ENCODE measurements at regions of chr10 and their contacts with region 1.

Region 1: GRCh38 chr10:78302989-78303854 is 269.6 kb downstream of the RPS24 start:
- DNase-seq: peak; percentile 98

Region 2: DNA sequence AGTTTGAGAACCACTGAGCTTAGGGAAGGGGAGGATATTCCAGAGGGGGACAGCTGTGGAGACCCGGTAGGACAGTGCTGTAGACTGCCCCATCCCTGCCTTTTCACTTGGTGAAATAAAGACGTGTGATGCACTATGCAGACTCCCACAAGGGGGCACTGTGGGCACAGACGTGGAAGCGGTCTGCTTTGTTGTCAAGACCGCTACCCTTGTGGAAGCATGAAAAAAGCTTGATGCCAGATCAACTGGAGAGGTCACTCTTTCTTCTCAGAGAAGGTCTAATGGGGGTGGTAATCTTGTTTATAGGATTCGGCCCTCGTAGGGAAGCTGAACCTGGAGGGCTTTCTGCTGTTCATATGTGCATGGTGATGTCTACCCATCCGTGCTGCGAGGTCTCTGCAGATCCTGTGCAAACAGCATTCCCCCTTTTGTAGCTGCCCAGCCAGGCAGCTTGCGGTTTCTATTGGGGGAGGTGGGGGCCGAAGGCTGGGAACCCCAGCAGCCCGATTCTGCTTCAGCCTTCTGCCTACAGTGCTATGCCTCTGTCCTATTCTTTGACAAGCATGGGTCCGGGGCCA is 255.8 kb before region 1 on chr10:
- intact Hi-C with region 1: loop called in 1 of 2 experiments (anchors 10 kb)
- DNase-seq: peak; percentile 96

Region 3: GRCh38 chr10:78211561-78212051 is 91.6 kb before region 1 on chr10:
- intact Hi-C with region 1: loop called in 1 of 2 experiments (anchors 5 kb)
- DNase-seq: peak; percentile 67

Region 4: DNA sequence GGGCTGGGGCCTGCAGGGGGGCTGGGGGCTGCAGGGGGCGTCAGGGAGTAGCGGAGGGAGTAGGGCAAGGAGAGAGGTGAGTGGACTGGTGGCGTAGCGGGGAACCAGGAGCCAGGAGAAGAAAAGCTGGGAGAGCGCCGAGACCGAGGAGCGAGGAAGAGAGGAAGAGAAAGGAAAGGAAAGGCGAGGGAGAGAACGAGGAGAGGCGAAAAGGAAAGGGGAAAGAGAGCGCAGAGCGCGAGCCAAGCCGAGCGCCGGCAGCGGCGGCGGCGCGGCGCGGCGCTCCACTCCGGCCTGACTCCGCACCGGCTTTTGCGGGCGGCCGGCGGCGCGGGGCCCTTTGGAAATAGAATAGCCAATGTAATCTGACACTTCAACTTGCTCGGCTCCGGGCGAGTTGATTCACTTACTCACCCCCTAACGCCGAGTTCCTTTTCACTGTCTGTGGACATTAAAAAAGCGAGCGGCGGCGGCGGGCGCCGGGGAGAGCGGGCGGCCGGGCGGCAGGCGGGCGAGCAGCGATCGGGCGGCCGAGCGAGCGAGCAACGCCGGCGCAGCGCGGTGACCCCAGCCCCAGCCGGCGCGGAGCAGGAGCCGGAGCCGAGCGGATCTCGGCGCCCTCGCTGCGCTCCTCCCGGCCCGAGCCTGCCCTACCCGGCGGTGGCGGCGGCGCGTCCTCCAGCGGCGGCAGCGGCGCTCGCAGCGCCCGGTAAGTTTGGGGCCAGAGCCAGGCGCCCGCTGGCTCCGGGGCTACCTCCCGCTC is 765.5 kb after region 1 on chr10 and contains the start of gene ZMIZ1:
- intact Hi-C with region 1: loop called in 1 of 2 experiments (anchors 10 kb)
- DNase-seq: peak; percentile 97
- total RNA-seq, gene ZMIZ1: 61.5 to 62.6 TPM

Region 5: DNA sequence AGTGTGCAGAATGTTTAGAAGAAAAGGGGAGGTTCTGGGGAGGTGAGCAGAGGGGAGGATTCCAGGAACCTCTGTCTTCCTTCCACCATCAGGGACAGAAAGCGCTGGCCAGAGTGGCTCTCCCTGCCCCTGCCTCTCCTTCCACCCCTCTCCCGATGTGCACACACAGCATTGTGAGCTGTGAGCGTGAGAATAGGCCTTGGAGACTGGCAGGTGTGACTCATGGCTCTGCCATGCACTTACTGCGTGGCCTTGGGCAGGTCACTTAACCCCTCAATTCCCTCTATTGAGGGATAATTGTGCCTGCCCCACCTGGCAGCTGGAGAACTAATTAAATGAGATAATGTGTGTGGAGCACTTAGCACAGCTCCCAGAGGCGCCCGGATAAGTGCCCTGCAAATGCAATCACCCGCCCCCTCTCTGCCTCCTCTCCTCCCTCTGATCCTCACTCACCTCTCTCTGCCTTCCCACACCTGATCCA is 881.0 kb after region 1 on chr10:
- intact Hi-C with region 1: loop called in 1 of 2 experiments (anchors 10 kb)
- DNase-seq: no peak

Region 6: DNA sequence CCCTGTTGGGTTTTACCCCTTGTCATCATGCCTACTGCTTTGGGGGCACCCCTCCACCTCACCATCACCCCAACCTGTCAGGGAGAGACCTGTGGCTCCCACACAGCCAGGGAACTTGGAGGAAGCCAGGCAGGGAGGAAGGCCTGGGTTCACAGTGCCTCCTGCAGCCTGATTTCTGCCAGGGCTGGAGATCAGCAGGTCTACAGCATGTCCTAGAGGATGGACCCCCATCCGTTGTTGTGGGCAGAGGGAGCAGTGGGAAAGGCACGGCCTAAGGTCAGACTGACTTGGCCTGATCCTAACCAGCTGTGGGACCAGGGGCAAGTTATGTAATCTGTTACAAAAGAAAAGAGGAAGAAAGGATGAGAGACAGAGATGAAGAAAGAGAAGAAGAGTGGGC is 1114.0 kb after region 1 on chr10:
- intact Hi-C with region 1: loop called in 1 of 2 experiments (anchors 5 kb)
- DNase-seq: peak; percentile 57